ENCODE measurements at regions of chr4 and their contacts with region 1.

Region 1: GRCh38 chr4:47729131-47729680 is 108.7 kb downstream of the CORIN start:
- DNase-seq: no peak
- H3K4me3 ChIP-seq: no peak overlapping the region
- H3K27ac ChIP-seq: no peak overlapping the region
- H3K27me3 ChIP-seq: no peaks in the 10 kb centered on the region
- CTCF ChIP-seq: no peak

Region 2: DNA sequence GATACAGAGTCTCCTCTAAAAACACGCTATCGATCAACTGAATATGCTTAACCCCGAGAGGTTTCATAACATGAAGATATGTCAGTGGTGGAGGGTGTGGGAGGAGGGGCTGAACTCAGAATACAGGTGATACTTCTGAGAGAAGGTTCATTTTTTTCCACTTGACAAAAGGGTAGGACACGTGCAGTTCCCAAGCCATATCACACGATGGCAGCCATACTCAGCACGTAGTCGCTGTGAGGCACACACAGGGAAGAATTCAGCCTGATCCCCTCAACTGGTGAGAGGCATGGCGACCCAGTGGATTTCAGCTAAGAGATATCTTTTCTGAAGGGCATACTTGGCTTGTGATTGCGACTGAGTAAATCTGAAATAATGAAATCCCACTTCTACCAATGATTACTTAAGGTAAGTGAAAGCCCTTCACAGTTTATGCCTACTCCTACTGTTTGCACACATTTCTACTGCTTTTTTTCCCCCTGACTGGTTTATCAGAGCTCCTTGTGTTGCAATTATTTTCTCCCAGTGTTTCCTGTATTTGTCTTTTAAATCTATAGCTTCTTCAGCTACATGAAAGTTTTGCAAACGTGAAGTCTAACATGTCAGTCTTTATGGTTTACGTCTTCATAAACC is 24.4 kb before region 1 on chr4:
- CTCF ChIA-PET with region 1: interaction called, 13 read pairs
- POLR2A ChIA-PET with region 1: no interaction called
- DNase-seq: peak; percentile 7
- H3K4me3 ChIP-seq: no peak overlapping the region
- H3K27ac ChIP-seq: no peak overlapping the region
- H3K27me3 ChIP-seq: peaks cover 3% of the 10 kb centered on the region
- CTCF ChIP-seq: peak; percentile 47

Region 3: DNA sequence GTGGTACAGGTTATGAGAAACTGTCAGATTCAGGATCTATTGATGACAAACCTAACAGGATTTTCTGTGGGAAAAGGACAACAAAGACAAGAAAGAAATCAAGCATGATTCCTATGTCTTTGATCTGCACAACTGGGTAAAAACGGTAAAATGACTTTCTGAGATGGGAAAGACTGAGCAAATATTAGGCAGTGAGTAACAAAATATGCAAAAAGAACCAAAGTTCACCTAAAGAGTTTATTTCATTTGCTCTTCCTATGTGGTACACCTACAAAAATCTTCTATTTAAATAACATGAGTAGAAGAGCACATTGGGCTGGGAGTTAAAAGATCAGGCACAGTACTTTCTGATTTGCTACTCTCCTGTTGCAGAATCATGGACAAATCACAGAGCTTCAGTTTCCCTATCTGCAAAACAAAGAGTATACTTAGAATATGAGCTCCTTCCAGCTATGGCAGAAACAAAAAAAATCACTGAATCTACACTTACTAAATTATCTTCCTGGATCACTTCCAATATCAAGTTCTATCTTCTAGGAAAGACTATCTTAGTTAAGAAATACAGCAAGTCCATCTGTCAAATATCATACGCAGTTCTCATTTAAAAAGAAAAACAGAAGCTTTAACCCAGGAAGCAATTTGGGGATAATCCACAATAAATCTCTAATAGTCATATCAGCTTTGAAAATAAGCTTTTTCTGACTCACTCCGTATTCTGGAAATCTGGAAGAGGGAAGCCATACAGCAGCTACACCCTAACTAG is 147.8 kb after region 1 on chr4:
- CTCF ChIA-PET with region 1: no interaction called
- POLR2A ChIA-PET with region 1: no interaction called
- DNase-seq: no peak
- H3K4me3 ChIP-seq: no peak overlapping the region
- H3K27ac ChIP-seq: no peak overlapping the region
- H3K27me3 ChIP-seq: no peaks in the 10 kb centered on the region
- CTCF ChIP-seq: no peak